GM12878 (cell line): ENCODE measurements at regions of chr6 and their contacts with region 1.

Region 1: DNA sequence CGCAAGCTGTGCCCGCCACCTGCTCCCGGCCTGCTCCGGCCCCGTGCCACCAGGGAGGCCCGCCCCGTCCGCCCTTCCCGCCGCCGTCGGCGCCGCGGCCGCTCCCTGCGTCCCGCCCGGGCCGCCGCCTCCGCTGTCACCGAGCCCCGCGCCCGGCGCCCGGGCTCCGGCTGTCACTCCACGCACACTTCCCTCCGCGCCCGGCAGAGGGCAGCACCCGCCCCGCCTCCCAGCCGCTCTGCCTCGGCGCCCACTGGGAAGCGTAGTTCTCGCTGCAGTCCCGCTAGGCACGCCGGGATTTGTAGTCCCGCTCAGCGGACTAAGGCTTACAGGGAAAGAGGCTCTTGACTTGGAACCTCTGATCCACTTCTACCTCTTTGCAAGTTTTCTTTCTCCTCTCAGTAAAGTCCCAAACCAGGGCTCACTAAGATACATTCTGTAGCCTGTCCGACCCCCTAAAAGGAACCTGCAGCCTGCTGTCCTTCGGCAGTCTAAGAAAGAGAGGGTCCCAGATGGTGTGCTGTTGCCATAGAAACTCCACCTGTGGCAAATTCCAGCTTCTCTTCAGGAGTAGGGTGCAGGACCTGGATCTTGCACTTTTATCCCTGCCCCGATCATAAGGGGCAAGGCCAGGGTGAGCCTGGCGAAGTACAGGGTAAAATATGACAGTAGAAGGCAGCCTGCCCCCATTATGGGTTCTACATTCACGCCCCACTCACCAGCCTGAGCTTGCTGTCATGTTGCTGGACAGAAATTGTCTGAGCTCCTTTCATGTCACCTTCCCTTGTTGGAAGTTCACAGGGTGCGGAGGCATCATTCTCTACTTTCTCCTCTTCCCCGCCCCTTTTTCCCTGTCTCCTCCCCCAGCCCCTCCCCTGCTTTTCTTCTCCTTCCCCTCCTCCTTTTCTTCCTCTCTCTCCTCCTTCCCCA is at the start of gene TFEB:
- DNase-seq: no peak
- ATAC-seq: peak; percentile 19
- H3K4me3 ChIP-seq: peak within 1 kb of the TSS; percentile 92
- H3K27ac ChIP-seq: peak within 1 kb of the TSS; percentile 98
- H3K4me1 ChIP-seq: peaks cover 1% of the 10 kb centered on the region
- H3K27me3 ChIP-seq: no peaks in the 10 kb centered on the region; a peak in 1 of 4 replicates
- CTCF ChIP-seq: peak; percentile 92 to 97 (median 95)
- EP300 ChIP-seq: no peak
- POLR2A ChIP-seq: no peak; the same call in 1 of the 2 replicates
- RAD21 ChIP-seq: peak; percentile 57
- polyA plus RNA-seq, gene TFEB: 0.84 to 2.6 TPM

Region 2: GRCh38 chr6:41072676-41073623 is 662.7 kb before region 1 on chr6 and contains the start of gene NFYA:
- CTCF ChIA-PET with region 1: no interaction called
- POLR2A ChIA-PET with region 1: no interaction called
- RAD21 ChIA-PET with region 1: no interaction called
- SMC1A ChIA-PET with region 1: no interaction called
- in situ Hi-C with region 1: no loop called
- intact Hi-C with region 1: loop called (anchors 10 kb)
- DNase-seq: no peak
- ATAC-seq: peak; percentile 85
- H3K4me3 ChIP-seq: peak within 1 kb of the TSS; percentile 88
- H3K27ac ChIP-seq: peak within 1 kb of the TSS; percentile 99
- H3K4me1 ChIP-seq: peaks cover 7% of the 10 kb centered on the region; the same call in 1 of the 2 replicates
- H3K27me3 ChIP-seq: no peaks in the 10 kb centered on the region
- CTCF ChIP-seq: peak in 2 of 3 experiments; percentile 32 to 34; a peak in 4 of 6 replicates
- EP300 ChIP-seq: no peak
- POLR2A ChIP-seq: peak; percentile 33
- RAD21 ChIP-seq: no peak
- polyA plus RNA-seq, gene NFYA: 6.4 to 7.3 TPM

Region 3: GRCh38 chr6:41683510-41684310 is 52.0 kb before region 1 on chr6:
- CTCF ChIA-PET with region 1: interaction called, 17 read pairs
- POLR2A ChIA-PET with region 1: interaction called, 8 read pairs
- RAD21 ChIA-PET with region 1: interaction called, 4 read pairs
- SMC1A ChIA-PET with region 1: no interaction called
- in situ Hi-C with region 1: no loop called
- intact Hi-C with region 1: no loop called
- DNase-seq: no peak
- ATAC-seq: peak; percentile 93
- H3K4me3 ChIP-seq: no peak overlapping the region
- H3K27ac ChIP-seq: no peak overlapping the region
- H3K4me1 ChIP-seq: no peaks in the 10 kb centered on the region
- H3K27me3 ChIP-seq: no peaks in the 10 kb centered on the region
- CTCF ChIP-seq: peak; percentile 85 to 93 (median 92)
- EP300 ChIP-seq: no peak
- POLR2A ChIP-seq: peak; percentile 73
- RAD21 ChIP-seq: peak; percentile 72

Region 4: GRCh38 chr6:41705996-41706835 is 29.5 kb before region 1 on chr6:
- CTCF ChIA-PET with region 1: interaction called, 87 read pairs
- POLR2A ChIA-PET with region 1: interaction called, 180 read pairs
- RAD21 ChIA-PET with region 1: interaction called, 300 read pairs
- SMC1A ChIA-PET with region 1: interaction called, 168 read pairs
- in situ Hi-C with region 1: no loop called
- intact Hi-C with region 1: loop called (anchors 1 kb)
- DNase-seq: peak; percentile 87
- ATAC-seq: peak; percentile 90
- H3K4me3 ChIP-seq: peak overlapping the region; percentile 85
- H3K27ac ChIP-seq: peak overlapping the region; percentile 99
- H3K4me1 ChIP-seq: peaks cover 55% of the 10 kb centered on the region
- H3K27me3 ChIP-seq: no peaks in the 10 kb centered on the region
- CTCF ChIP-seq: peak; percentile 82 to 96 (median 91)
- EP300 ChIP-seq: peak; percentile 93 to 97
- POLR2A ChIP-seq: peak; percentile 51; the same call in 1 of the 2 replicates
- RAD21 ChIP-seq: peak; percentile 48

Region 5: DNA sequence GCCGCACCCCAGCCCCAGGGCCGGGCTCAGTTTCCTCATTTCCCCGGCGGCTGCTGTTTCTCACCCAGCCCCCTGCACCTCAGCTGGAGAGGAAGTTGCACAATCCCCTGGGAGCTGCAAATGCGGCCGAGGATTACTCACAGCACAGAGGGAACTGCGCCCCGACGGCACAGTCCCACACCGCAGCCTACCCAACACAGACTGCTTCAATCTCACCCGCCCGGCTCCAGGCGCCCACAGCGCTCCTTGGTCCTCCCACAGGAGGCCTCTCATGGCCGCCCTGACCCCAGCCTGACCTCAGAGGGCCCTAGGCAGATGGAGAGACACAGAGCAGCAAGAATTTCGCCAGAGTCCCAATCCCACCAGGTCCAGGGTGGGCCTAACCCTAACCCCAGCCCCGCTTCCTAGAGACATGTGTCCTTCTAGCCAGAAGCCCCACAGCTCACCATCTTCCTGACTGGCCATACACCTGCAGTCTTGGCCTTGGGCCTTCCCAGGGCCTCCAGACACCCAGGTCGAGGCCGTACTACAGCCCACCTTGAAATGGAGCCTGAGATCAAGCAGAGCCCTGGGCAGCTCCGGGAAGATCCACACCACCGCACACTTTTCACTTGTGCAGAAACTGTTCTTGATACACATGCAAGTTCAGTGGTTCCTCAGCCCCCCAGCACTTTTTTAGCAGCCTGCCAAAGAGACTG is 12.0 kb before region 1 on chr6:
- CTCF ChIA-PET with region 1: interaction called, 84 read pairs
- POLR2A ChIA-PET with region 1: interaction called, 293 read pairs
- RAD21 ChIA-PET with region 1: interaction called, 300 read pairs
- SMC1A ChIA-PET with region 1: interaction called, 101 read pairs
- in situ Hi-C with region 1: no loop called
- intact Hi-C with region 1: loop called (anchors 1 kb)
- DNase-seq: no peak
- ATAC-seq: peak; percentile 82
- H3K4me3 ChIP-seq: peak overlapping the region; percentile 81
- H3K27ac ChIP-seq: peak overlapping the region; percentile 97
- H3K4me1 ChIP-seq: peaks cover 75% of the 10 kb centered on the region
- H3K27me3 ChIP-seq: no peaks in the 10 kb centered on the region
- CTCF ChIP-seq: no peak
- EP300 ChIP-seq: peak; percentile 41 to 60; a peak in 2 of 4 replicates
- POLR2A ChIP-seq: peak; percentile 90
- RAD21 ChIP-seq: no peak; the same call in 1 of the 2 replicates

Region 6: DNA sequence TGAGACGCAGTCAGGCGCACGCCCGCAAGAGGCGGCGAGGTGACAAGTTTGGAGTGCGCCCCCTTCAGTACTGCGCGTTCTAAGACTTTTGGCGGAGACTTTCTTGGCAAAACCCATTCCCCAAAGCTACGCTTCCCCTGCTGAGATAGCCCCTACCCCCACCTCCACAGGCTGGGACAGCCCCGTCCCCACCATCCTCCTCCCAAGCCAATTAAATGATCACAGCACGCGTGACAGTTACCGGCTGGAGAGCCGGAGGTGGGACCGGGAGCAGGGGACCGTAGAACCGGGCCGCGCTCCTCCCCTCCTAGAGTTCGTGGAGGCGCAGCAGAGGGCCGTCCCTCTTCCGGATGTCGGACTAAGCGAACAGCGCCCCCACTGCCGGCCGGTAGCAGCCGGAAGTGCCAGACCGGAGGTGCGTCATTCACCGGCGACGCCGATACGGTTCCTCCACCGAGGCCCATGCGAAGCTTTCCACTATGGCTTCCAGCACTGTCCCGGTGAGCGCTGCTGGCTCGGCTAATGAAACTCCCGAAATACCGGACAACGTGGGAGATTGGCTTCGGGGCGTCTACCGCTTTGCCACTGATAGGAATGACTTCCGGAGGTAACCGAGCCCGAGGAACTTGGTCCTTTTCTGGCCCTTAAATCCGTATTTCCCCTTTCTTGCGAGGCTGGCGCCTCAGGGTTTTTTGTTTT is 51.7 kb after region 1 on chr6 and contains the start of gene TOMM6:
- CTCF ChIA-PET with region 1: interaction called, 9 read pairs
- POLR2A ChIA-PET with region 1: interaction called, 3 read pairs
- RAD21 ChIA-PET with region 1: interaction called, 4 read pairs
- SMC1A ChIA-PET with region 1: interaction called, 3 read pairs
- in situ Hi-C with region 1: no loop called
- intact Hi-C with region 1: loop called (anchors 2 kb)
- DNase-seq: peak; percentile 77
- ATAC-seq: peak; percentile 90
- H3K4me3 ChIP-seq: peak within 1 kb of the TSS; percentile 100
- H3K27ac ChIP-seq: peak within 1 kb of the TSS; percentile 93
- H3K4me1 ChIP-seq: peaks cover 22% of the 10 kb centered on the region
- H3K27me3 ChIP-seq: no peaks in the 10 kb centered on the region
- CTCF ChIP-seq: peak; percentile 84 to 89 (median 88)
- EP300 ChIP-seq: no peak
- POLR2A ChIP-seq: peak; percentile 89
- RAD21 ChIP-seq: no peak
- polyA plus RNA-seq, gene TOMM6: 653 to 729 TPM